ENCODE measurements at regions of chr7 and their contacts with region 1.

Region 1: GRCh38 chr7:27179503-27180430 is 5.3 kb downstream of the HOXA11 start:
- DNase-seq: peak; percentile 80
- ATAC-seq: peak; percentile 63
- H3K4me3 Mint-ChIP-seq: peak overlapping the region; percentile 41
- H3K27ac Mint-ChIP-seq: no peak overlapping the region
- H3K4me1 Mint-ChIP-seq: peaks cover 28% of the 10 kb centered on the region
- H3K27me3 Mint-ChIP-seq: peaks cover 100% of the 10 kb centered on the region
- CTCF ChIP-seq: peak; percentile 83

Region 2: DNA sequence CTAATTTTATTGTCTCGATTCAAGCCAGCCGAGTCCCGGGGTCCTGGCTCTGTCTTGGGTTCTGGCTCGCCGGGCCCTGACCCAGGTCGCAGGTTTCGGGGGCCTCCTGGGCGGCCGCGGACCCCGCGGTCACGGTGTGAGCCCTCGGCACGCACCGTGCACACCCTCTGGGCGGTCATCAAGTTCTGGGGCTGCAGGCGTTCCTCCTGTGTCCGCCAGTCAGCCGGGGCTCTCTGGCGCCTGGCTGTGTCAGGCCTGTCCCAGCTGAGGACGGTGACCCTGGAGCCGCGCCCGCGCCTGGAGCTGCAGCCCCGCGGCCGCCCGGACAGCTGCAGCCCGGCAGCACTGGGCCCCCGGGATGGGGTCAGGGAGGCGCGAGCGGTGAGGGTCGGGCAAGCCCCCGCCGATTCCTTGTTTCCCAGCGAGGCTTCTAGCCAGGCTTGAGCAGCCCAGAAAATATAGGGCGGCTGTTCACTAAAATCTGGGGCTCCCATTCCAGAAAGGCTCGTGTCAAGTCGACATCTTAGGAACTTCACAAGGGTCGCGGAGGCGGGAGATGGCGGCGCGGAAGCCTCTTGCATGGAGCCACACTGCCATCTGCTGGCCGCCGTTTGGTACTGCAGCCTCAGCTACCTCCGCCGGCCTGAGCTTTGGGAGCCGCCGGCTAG is 19.1 kb before region 1 on chr7:
- CTCF ChIA-PET with region 1: interaction called, 30 read pairs
- POLR2A ChIA-PET with region 1: no interaction called
- DNase-seq: peak; percentile 92
- ATAC-seq: peak; percentile 43
- H3K4me3 Mint-ChIP-seq: peak overlapping the region; percentile 29
- H3K27ac Mint-ChIP-seq: no peak overlapping the region
- H3K4me1 Mint-ChIP-seq: peaks cover 12% of the 10 kb centered on the region
- H3K27me3 Mint-ChIP-seq: peaks cover 100% of the 10 kb centered on the region
- CTCF ChIP-seq: peak; percentile 100

Region 3: GRCh38 chr7:27196287-27196767 is 16.6 kb after region 1 on chr7:
- CTCF ChIA-PET with region 1: interaction called, 34 read pairs
- POLR2A ChIA-PET with region 1: interaction called, 3 read pairs
- DNase-seq: peak; percentile 90
- ATAC-seq: no peak
- H3K4me3 Mint-ChIP-seq: no peak overlapping the region
- H3K27ac Mint-ChIP-seq: no peak overlapping the region
- H3K4me1 Mint-ChIP-seq: peaks cover 17% of the 10 kb centered on the region
- H3K27me3 Mint-ChIP-seq: peaks cover 96% of the 10 kb centered on the region
- CTCF ChIP-seq: peak; percentile 55

Region 4: DNA sequence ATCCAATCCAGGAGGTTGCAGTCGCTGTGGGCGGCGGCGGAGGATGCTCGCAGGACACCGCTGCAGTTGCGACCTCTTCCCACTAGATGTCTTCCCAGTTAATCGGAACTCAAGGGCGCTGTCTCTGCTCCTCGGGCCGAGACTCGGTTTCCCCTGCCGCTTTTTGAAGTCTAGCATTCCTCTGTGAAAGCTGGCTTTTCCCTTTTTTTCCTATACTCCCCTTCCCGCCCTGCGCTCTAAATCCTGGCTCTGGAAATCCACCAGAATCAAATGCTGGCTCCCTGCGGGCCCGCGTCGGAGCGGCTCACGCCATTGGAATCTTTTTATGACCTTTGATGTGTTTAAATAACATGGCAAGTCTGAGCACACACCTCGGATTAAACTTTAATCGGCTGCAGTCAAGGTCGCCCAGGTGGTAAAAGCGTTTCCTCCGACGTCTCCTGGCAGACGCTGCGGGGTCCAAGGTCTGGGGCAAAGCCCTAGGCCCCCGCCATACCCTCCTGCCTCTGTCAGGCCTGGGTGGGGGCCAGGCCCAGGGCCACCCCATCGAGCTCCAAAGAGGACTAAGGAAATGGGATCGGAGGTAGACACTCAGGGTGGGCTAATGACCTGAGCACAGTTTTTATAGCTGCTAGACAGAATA is 30.8 kb after region 1 on chr7:
- CTCF ChIA-PET with region 1: interaction called, 12 read pairs
- POLR2A ChIA-PET with region 1: no interaction called
- DNase-seq: peak; percentile 82
- ATAC-seq: peak; percentile 71
- H3K4me3 Mint-ChIP-seq: no peak overlapping the region; the same call in 1 of the 2 replicates
- H3K27ac Mint-ChIP-seq: no peak overlapping the region
- H3K4me1 Mint-ChIP-seq: peaks cover 31% of the 10 kb centered on the region
- H3K27me3 Mint-ChIP-seq: peaks cover 100% of the 10 kb centered on the region
- CTCF ChIP-seq: peak; percentile 68

Region 5: GRCh38 chr7:27739909-27740448 is 560.2 kb after region 1 on chr7 and contains the start of gene TAX1BP1:
- CTCF ChIA-PET with region 1: no interaction called
- POLR2A ChIA-PET with region 1: no interaction called
- DNase-seq: peak; percentile 91
- ATAC-seq: peak; percentile 80
- H3K4me3 Mint-ChIP-seq: peak within 1 kb of the TSS; percentile 94
- H3K27ac Mint-ChIP-seq: peak within 1 kb of the TSS; percentile 99
- H3K4me1 Mint-ChIP-seq: peaks cover 30% of the 10 kb centered on the region
- H3K27me3 Mint-ChIP-seq: no peaks in the 10 kb centered on the region
- CTCF ChIP-seq: no peak
- total RNA-seq, gene TAX1BP1: 51.3 to 69.9 TPM (median 52.4 TPM) in 3 replicates

Measured in WTC11 (cell line).